Aorta (tissue), 5 donors: ENCODE measurements at regions of chr22 and their contacts with region 1.

Region 1: DNA sequence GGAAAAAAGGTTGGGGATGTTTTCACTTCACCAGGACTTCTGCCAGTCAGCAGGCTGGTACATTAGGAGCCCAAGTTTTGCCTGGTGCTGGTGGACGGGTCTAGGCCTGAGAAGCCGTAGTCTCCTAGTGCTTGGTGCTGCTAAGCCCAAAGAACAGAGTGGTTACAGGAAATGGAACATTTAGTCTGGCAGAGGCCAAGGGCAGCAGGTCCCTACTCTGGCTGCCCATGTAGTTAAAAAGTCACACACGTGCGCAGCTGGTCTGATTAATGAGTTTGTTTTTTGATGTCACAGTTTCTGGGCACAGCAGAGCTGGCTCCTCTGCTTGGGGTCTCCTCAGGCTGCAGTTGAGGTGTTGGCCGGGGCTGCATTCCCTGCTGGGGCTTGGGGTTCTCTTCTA is 20.6 kb downstream of the BCR start:
- DNase-seq: no peak
- ATAC-seq: no peak
- H3K4me3 ChIP-seq: no peak overlapping the region
- H3K27ac ChIP-seq: peak overlapping the region in 1 of 2 donors; percentile 87
- H3K4me1 ChIP-seq: peaks cover 0 to 4% of the 10 kb centered on the region in 2 donors
- H3K27me3 ChIP-seq: no peaks in the 10 kb centered on the region

Region 2: DNA sequence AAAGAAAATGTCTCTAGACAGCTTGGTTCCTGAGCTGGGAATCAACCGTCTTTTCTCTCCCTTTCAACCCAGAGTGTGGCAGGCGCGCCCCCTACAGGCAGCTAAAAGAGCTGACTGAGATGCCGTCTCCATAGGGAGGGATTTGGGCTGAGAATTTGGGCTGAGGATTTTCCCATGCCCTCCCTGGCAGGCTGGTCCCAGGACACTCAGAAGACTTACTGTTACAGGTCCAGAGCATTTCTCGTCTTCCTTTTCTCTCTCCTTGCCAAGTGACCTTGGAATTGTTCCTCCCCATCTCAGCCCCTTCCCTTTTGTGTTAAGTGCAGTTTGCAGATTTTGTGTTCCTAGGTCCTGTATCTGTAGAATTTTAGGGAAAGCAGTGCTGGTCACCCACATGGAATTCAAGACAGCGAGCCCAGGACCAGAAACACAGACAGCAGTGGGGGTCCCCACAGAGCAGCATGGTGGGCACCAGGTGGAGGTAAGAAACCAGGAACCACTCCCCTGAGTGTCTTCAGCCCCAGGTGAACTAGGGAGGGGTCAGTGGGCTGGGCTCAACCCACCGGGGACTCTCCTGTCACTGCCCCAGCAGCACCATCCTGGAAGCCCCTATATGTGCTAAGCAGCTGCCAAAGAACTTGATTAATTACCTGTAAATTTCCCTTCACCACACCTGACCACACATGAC is 323.2 kb before region 1 on chr22:
- intact Hi-C with region 1: no loop called
- DNase-seq: peak; percentile 72 to 87
- ATAC-seq: no peak
- H3K4me3 ChIP-seq: no peak overlapping the region
- H3K27ac ChIP-seq: no peak overlapping the region
- H3K4me1 ChIP-seq: no peaks in the 10 kb centered on the region
- H3K27me3 ChIP-seq: no peaks in the 10 kb centered on the region

Region 3: DNA sequence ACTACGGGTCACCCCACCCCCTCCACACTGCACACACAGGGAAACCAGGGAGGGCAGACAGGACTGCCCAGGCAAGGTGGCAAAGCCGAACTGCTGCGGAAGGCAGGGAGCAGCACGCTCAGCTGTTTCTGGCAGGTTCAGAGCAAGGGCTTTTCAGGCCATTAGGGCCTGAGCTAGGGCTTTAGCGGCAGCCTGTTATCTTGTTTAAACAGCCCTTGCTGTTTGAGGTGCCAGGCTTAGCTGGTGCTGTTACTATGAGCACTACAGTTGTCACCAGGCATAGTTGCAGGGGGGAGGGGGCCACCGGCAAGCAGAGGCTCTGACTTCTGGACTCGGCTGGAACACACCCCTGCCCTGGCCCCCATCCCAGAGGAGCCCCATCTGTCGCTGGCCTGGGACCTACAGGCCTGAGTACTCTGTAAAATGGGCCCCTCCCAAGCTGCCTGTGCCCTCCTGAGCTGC is 94.0 kb before region 1 on chr22:
- intact Hi-C with region 1: no loop called
- DNase-seq: no peak
- ATAC-seq: no peak
- H3K4me3 ChIP-seq: no peak overlapping the region
- H3K27ac ChIP-seq: no peak overlapping the region
- H3K4me1 ChIP-seq: no peaks in the 10 kb centered on the region
- H3K27me3 ChIP-seq: no peaks in the 10 kb centered on the region

Region 4: GRCh38 chr22:23187871-23188700 is 12.8 kb before region 1 on chr22:
- intact Hi-C with region 1: loop called in 1 of 2 experiments (anchors 2 kb)
- DNase-seq: no peak
- ATAC-seq: no peak
- H3K4me3 ChIP-seq: no peak overlapping the region
- H3K27ac ChIP-seq: no peak overlapping the region
- H3K4me1 ChIP-seq: no peaks in the 10 kb centered on the region
- H3K27me3 ChIP-seq: no peaks in the 10 kb centered on the region